GM12878 (cell line): ENCODE measurements at regions of chr6 and their contacts with region 1.

Region 1: GRCh38 chr6:34671801-34672656 is 24.5 kb downstream of the ILRUN start:
- DNase-seq: peak; percentile 84
- ATAC-seq: peak; percentile 88
- H3K4me3 ChIP-seq: peak overlapping the region; percentile 46
- H3K27ac ChIP-seq: peak overlapping the region; percentile 92
- H3K4me1 ChIP-seq: peaks cover 38% of the 10 kb centered on the region
- H3K27me3 ChIP-seq: no peaks in the 10 kb centered on the region
- CTCF ChIP-seq: no peak
- EP300 ChIP-seq: peak; percentile 39 to 44; a peak in 2 of 4 replicates
- POLR2A ChIP-seq: peak; percentile 35; the same call in 1 of the 2 replicates
- RAD21 ChIP-seq: no peak

Region 2: DNA sequence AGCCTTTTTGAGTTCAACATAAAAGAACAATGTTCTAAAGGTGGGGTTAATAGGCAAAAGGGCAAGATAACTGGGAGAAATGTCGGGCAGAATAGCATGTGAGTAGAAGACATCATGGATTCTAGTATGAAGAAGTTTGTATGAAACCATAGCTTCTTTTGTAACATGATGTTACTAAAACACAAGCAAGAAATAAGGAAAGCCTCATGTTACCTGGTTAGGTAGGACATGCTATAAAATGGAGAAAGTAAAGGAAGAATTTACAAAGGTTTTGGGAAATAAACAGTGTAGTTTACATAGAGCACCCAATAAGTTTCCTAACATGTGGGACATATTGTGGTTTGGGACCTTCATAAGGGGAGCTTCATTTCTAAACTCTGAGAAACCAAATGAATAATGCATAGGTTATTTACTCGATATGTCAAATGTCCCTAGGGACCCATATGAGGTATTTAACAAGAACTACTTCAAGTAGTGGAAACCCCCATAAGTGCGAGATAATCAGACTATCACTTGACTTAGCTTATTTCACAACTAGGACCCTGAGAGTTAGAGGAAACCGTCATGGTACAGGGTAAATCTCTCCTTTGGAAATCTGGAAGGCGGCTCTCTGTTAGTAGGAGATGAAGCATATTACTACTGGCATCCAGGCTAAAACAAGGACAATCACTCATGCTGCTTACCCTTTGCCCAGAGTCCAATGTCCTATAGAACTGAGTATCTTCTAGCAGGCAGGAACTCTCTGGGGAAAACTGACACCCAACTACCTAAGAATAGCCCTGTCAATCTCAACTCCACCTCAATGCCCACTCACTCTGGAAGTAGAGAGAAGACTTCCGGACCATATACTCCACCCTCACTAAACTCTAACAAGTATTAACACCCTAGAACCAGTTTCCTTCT is 32.9 kb before region 1 on chr6:
- CTCF ChIA-PET with region 1: interaction called, 14 read pairs
- POLR2A ChIA-PET with region 1: interaction called, 101 read pairs
- RAD21 ChIA-PET with region 1: interaction called, 115 read pairs
- SMC1A ChIA-PET with region 1: interaction called, 213 read pairs
- in situ Hi-C with region 1: no loop called
- intact Hi-C with region 1: loop called (anchors 5 kb)
- DNase-seq: peak; percentile 87
- ATAC-seq: peak; percentile 86
- H3K4me3 ChIP-seq: no peak overlapping the region
- H3K27ac ChIP-seq: peak overlapping the region; percentile 93
- H3K4me1 ChIP-seq: peaks cover 27% of the 10 kb centered on the region
- H3K27me3 ChIP-seq: no peaks in the 10 kb centered on the region
- CTCF ChIP-seq: no peak
- EP300 ChIP-seq: peak; percentile 79 to 80
- POLR2A ChIP-seq: no peak
- RAD21 ChIP-seq: no peak

Region 3: GRCh38 chr6:34650823-34651222 is 21.2 kb before region 1 on chr6:
- CTCF ChIA-PET with region 1: interaction called, 56 read pairs
- POLR2A ChIA-PET with region 1: interaction called, 329 read pairs
- RAD21 ChIA-PET with region 1: interaction called, 183 read pairs
- SMC1A ChIA-PET with region 1: interaction called, 213 read pairs
- in situ Hi-C with region 1: no loop called
- intact Hi-C with region 1: loop called (anchors 1 kb)
- DNase-seq: no peak
- ATAC-seq: no peak
- H3K4me3 ChIP-seq: no peak overlapping the region
- H3K27ac ChIP-seq: peak overlapping the region; percentile 71
- H3K4me1 ChIP-seq: peaks cover 35% of the 10 kb centered on the region
- H3K27me3 ChIP-seq: no peaks in the 10 kb centered on the region
- CTCF ChIP-seq: no peak
- EP300 ChIP-seq: no peak
- POLR2A ChIP-seq: no peak
- RAD21 ChIP-seq: no peak

Region 4: DNA sequence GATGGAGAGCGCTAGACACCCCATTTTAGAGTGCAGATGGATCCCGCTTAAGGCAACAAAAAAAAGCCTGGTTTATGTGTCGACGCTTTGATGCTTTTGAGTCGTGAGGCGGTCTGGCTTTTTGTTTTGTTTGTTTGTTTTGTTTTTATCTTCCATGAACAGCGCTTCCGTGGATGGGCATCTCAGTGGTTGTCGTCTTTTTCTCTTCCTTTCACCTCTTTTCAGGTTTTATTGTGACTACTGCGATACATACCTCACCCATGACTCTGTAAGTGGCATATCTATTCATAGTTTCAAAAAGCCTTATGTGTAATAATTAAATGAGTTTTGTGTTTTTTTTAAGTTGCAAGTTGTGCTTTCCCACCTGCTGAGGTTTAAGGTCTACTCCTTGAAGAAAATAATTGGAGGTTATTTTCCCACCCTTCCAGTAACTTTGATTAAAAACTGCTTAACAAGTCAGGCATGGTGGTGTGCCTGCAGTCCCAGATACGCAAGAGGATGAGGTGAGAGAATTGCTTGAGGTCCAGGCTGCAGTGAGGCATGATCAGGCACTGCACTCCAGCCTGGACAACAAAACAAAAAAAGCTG is 85.8 kb after region 1 on chr6:
- CTCF ChIA-PET with region 1: interaction called, 4 read pairs
- POLR2A ChIA-PET with region 1: interaction called, 5 read pairs
- RAD21 ChIA-PET with region 1: interaction called, 10 read pairs
- SMC1A ChIA-PET with region 1: interaction called, 9 read pairs
- in situ Hi-C with region 1: no loop called
- intact Hi-C with region 1: loop called (anchors 5 kb)
- DNase-seq: no peak
- ATAC-seq: no peak
- H3K4me3 ChIP-seq: peak overlapping the region; percentile 91
- H3K27ac ChIP-seq: peak overlapping the region; percentile 86
- H3K4me1 ChIP-seq: 0 out of 2 replicates have a peak, but pooled peaks cover 5% of the 10 kb centered on the region
- H3K27me3 ChIP-seq: no peaks in the 10 kb centered on the region
- CTCF ChIP-seq: no peak
- EP300 ChIP-seq: no peak
- POLR2A ChIP-seq: no peak
- RAD21 ChIP-seq: no peak

Region 5: GRCh38 chr6:34791701-34792235 is 119.7 kb after region 1 on chr6 and contains the start of gene BLTP3A:
- CTCF ChIA-PET with region 1: interaction called, 9 read pairs
- POLR2A ChIA-PET with region 1: interaction called, 4 read pairs
- RAD21 ChIA-PET with region 1: interaction called, 8 read pairs
- SMC1A ChIA-PET with region 1: interaction called, 5 read pairs
- in situ Hi-C with region 1: no loop called
- intact Hi-C with region 1: loop called (anchors 5 kb)
- DNase-seq: no peak
- ATAC-seq: peak; percentile 95
- H3K4me3 ChIP-seq: peak within 1 kb of the TSS; percentile 88
- H3K27ac ChIP-seq: peak within 1 kb of the TSS; percentile 79
- H3K4me1 ChIP-seq: no peaks in the 10 kb centered on the region; the same call in 1 of the 2 replicates
- H3K27me3 ChIP-seq: no peaks in the 10 kb centered on the region
- CTCF ChIP-seq: peak in 1 of 3 experiments; percentile 44; a peak in 1 of 6 replicates
- EP300 ChIP-seq: no peak
- POLR2A ChIP-seq: peak; percentile 89
- RAD21 ChIP-seq: peak; percentile 50
- polyA plus RNA-seq, gene BLTP3A: 2.7 to 2.8 TPM

Region 6: GRCh38 chr6:34887753-34888513 is 215.9 kb after region 1 on chr6 and contains the start of gene TAF11:
- CTCF ChIA-PET with region 1: interaction called, 4 read pairs
- POLR2A ChIA-PET with region 1: interaction called, 3 read pairs
- RAD21 ChIA-PET with region 1: interaction called, 13 read pairs
- SMC1A ChIA-PET with region 1: interaction called, 4 read pairs
- in situ Hi-C with region 1: no loop called
- intact Hi-C with region 1: no loop called
- DNase-seq: peak; percentile 61
- ATAC-seq: peak; percentile 89
- H3K4me3 ChIP-seq: peak within 1 kb of the TSS; percentile 97
- H3K27ac ChIP-seq: peak within 1 kb of the TSS; percentile 88
- H3K4me1 ChIP-seq: peaks cover 5% of the 10 kb centered on the region
- H3K27me3 ChIP-seq: no peaks in the 10 kb centered on the region
- CTCF ChIP-seq: no peak
- EP300 ChIP-seq: 0 out of 4 replicates have a peak, but pooled peaks of 1 of the 2 experiments have one; percentile 12
- POLR2A ChIP-seq: peak; percentile 97
- RAD21 ChIP-seq: no peak
- polyA plus RNA-seq, gene TAF11: 24.6 to 31.7 TPM

Region 7: GRCh38 chr6:34934516-34934915 is 262.5 kb after region 1 on chr6:
- CTCF ChIA-PET with region 1: no interaction called
- POLR2A ChIA-PET with region 1: no interaction called
- RAD21 ChIA-PET with region 1: no interaction called
- SMC1A ChIA-PET with region 1: no interaction called
- in situ Hi-C with region 1: no loop called
- intact Hi-C with region 1: no loop called
- DNase-seq: no peak
- ATAC-seq: no peak
- H3K4me3 ChIP-seq: no peak overlapping the region
- H3K27ac ChIP-seq: no peak overlapping the region
- H3K4me1 ChIP-seq: no peaks in the 10 kb centered on the region
- H3K27me3 ChIP-seq: no peaks in the 10 kb centered on the region
- CTCF ChIP-seq: no peak
- EP300 ChIP-seq: no peak
- POLR2A ChIP-seq: no peak
- RAD21 ChIP-seq: no peak